B cell (primary cell): ENCODE measurements at regions of chr17 and their contacts with region 1.

Region 1: DNA sequence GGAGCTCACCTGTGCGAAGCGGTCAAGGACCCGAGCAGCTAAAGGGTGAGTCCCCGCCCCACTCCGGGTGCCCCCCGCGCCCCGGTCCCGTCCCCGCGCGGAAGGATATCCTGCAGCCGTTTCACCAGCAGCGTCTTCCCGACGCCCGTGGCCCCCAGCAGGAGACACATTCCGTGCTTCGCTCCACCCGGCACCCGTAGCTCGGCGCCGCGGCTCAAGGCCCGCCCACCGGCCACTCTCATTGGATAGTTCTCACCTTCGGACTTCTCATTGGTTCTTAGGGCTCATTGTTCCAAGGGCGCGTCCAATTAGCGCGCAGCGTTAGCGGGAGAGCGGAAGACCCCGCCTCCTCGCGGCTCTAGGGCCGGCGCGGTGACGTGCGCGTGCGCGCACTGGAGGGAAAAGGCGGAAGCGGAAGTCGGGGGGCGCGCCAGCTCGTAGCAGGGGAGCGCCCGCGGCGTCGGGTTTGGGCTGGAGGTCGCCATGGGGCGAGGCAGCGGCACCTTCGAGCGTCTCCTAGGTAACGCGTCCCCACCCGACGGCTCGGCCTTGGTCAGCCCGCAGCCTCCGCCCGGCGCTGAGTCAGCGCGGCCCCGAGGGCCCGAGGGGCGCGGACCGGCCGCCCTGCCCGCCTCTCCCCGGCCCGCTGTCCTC is at the starts of genes ARL16 and HGS:
- DNase-seq: peak; percentile 100
- ATAC-seq: peak; percentile 98
- H3K4me3 ChIP-seq: peak within 1 kb of the TSS; percentile 58 to 94 (median 93)
- H3K4me3 Mint-ChIP-seq: peak within 1 kb of the TSS; percentile 91
- H3K27ac ChIP-seq: peak within 1 kb of the TSS; percentile 53 to 83
- H3K27ac Mint-ChIP-seq: peak within 1 kb of the TSS; percentile 95
- H3K4me1 ChIP-seq: peaks cover 22 to 25% of the 10 kb centered on the region in 2 donors
- H3K4me1 Mint-ChIP-seq: peaks cover 33% of the 10 kb centered on the region
- H3K27me3 ChIP-seq: no peaks in the 10 kb centered on the region
- H3K27me3 Mint-ChIP-seq: no peaks in the 10 kb centered on the region
- CTCF ChIP-seq: no peak
- total RNA-seq, gene ARL16: 32.5 and 35.3 TPM in 2 replicates
- total RNA-seq, gene HGS: 184 and 190 TPM in 2 replicates

Region 2: GRCh38 chr17:80279895-80280294 is 1403.8 kb before region 1 on chr17:
- CTCF ChIA-PET with region 1: no interaction called
- POLR2A ChIA-PET with region 1: no interaction called
- intact Hi-C with region 1: no loop called
- DNase-seq: no peak
- ATAC-seq: no peak
- H3K4me3 ChIP-seq: no peak overlapping the region
- H3K4me3 Mint-ChIP-seq: no peak overlapping the region
- H3K27ac ChIP-seq: no peak overlapping the region
- H3K27ac Mint-ChIP-seq: no peak overlapping the region
- H3K4me1 ChIP-seq: no peaks in the 10 kb centered on the region
- H3K4me1 Mint-ChIP-seq: peaks cover 10% of the 10 kb centered on the region
- H3K27me3 ChIP-seq: no peaks in the 10 kb centered on the region
- H3K27me3 Mint-ChIP-seq: no peaks in the 10 kb centered on the region
- CTCF ChIP-seq: no peak

Region 3: DNA sequence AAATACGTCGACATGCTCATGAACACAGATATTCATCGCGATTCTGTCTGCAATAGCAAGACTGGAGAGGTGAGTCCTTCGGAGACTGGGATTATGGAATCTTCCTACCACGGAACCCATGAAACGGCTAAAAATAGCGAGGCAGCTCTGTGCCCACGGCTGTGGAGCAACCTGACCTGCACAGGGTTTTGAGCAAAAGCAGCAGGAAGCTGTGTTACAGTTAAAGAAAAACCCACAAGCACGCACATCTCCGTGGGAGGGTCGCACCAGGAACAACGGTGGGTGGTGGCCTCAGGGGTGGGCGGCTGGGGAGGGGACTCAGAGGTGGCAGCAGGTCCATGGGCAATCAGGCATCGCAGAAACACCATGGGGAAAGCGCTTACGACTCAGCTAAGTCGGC is 413.4 kb before region 1 on chr17:
- CTCF ChIA-PET with region 1: no interaction called
- POLR2A ChIA-PET with region 1: no interaction called
- intact Hi-C with region 1: no loop called
- DNase-seq: no peak
- ATAC-seq: no peak
- H3K4me3 ChIP-seq: no peak overlapping the region
- H3K4me3 Mint-ChIP-seq: no peak overlapping the region
- H3K27ac ChIP-seq: no peak overlapping the region
- H3K27ac Mint-ChIP-seq: no peak overlapping the region
- H3K4me1 ChIP-seq: no peaks in the 10 kb centered on the region
- H3K4me1 Mint-ChIP-seq: no peaks in the 10 kb centered on the region
- H3K27me3 ChIP-seq: no peaks in the 10 kb centered on the region
- H3K27me3 Mint-ChIP-seq: no peaks in the 10 kb centered on the region
- CTCF ChIP-seq: no peak

Region 4: DNA sequence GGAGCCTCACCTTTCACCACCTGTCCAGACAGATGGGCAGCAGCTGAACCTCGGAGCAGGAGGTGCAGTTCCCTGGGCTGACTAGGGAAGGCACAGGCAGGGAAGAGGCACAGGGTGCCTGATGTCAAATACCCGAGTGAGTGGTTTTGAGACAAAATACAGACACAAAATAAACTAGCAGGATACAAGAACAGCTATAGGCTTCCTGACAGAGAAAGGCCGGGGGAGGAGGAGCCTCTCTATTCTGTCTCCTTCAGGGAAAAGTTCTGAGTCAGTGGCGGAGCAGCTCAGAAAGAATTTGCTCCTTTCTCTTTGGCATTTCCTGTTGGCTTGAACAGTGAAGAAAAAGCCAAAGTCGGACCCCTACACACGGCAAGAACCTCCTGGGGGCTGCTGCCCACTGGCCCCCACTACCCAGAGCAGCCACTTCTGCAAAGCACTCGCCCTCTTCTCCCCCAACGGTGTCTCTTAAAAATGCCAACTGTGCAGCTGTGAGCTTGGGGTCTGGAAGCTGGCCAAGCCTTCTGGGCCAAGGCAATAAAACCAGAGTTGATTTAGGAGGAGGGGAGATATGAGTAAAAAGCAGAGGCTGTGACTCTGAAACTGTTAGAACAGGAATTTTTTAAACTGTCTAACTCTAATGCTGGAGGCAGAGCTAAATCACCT is 117.1 kb before region 1 on chr17:
- CTCF ChIA-PET with region 1: no interaction called
- POLR2A ChIA-PET with region 1: no interaction called
- intact Hi-C with region 1: no loop called
- DNase-seq: no peak
- ATAC-seq: no peak
- H3K4me3 ChIP-seq: no peak overlapping the region
- H3K4me3 Mint-ChIP-seq: no peak overlapping the region
- H3K27ac ChIP-seq: no peak overlapping the region
- H3K27ac Mint-ChIP-seq: no peak overlapping the region
- H3K4me1 ChIP-seq: peaks cover 13 to 21% of the 10 kb centered on the region in 2 donors
- H3K4me1 Mint-ChIP-seq: peaks cover 15% of the 10 kb centered on the region
- H3K27me3 ChIP-seq: no peaks in the 10 kb centered on the region
- H3K27me3 Mint-ChIP-seq: no peaks in the 10 kb centered on the region
- CTCF ChIP-seq: no peak

Region 5: DNA sequence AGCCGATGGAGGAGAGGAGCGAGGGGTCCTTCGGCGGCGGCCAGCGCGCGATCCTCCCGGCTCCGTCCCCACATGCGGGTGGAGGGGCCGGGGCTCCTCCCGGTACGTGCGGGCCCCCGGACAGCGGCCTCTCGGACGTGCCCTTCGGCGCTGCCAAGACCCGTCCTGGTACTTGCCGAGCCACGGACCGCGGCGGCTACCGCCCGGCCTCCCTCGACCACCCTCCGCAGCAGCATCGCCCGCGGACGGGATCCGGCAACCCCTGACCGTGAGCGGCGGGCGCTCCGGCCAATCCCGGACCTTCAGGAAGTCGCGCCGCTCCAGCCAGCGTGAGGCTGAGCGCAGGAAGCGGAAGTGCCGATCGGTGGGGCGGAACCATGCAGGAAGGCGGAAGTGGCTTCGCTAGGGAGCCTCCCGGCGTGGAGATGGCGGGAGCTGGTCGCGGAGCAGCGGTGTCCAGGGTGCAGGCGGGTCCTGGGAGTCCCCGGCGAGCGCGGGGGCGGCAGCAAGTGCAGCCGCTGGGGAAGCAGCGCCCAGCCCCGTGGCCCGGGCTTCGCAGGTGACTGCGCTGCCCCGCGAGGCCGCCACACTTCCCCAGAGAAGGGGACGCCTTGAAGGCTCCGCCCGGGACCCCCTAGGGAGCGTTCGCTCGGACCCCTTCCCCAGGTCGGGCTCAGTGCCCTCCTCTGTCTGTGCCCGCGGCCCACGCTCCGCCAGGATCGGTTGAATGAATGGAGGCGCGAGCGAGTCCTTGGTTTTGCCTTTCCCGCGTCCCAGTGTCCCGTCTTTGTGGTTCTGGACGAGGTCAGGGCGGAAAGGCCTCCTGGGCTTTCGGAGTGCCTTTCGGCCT is 17.1 kb before region 1 on chr17 and contains the starts of genes CCDC137 and OXLD1:
- CTCF ChIA-PET with region 1: interaction called, 5 read pairs
- POLR2A ChIA-PET with region 1: interaction called, 5 read pairs
- intact Hi-C with region 1: loop called (anchors 1 kb)
- DNase-seq: peak; percentile 94
- ATAC-seq: peak; percentile 97
- H3K4me3 ChIP-seq: peak within 1 kb of the TSS; percentile 77 to 98 (median 93)
- H3K4me3 Mint-ChIP-seq: peak within 1 kb of the TSS; percentile 91
- H3K27ac ChIP-seq: peak within 1 kb of the TSS; percentile 69 to 80
- H3K27ac Mint-ChIP-seq: peak within 1 kb of the TSS; percentile 96
- H3K4me1 ChIP-seq: peaks cover 19 to 25% of the 10 kb centered on the region in 2 donors
- H3K4me1 Mint-ChIP-seq: peaks cover 23% of the 10 kb centered on the region
- H3K27me3 ChIP-seq: no peaks in the 10 kb centered on the region
- H3K27me3 Mint-ChIP-seq: no peaks in the 10 kb centered on the region
- CTCF ChIP-seq: no peak
- total RNA-seq, gene CCDC137: 36.0 and 41.7 TPM in 2 replicates
- total RNA-seq, gene OXLD1: 38.6 and 39.5 TPM in 2 replicates

Region 6: GRCh38 chr17:81702971-81703746 is 19.4 kb after region 1 on chr17 and contains the start of gene MRPL12:
- CTCF ChIA-PET with region 1: interaction called, 4 read pairs
- POLR2A ChIA-PET with region 1: interaction called, 10 read pairs
- intact Hi-C with region 1: loop called (anchors 1 kb)
- DNase-seq: peak; percentile 94
- ATAC-seq: peak; percentile 95
- H3K4me3 ChIP-seq: peak within 1 kb of the TSS; percentile 45 to 98 (median 68)
- H3K4me3 Mint-ChIP-seq: peak within 1 kb of the TSS; percentile 90
- H3K27ac ChIP-seq: peak within 1 kb of the TSS; percentile 57 to 97
- H3K27ac Mint-ChIP-seq: peak within 1 kb of the TSS; percentile 91
- H3K4me1 ChIP-seq: peaks cover 24 to 32% of the 10 kb centered on the region in 2 donors
- H3K4me1 Mint-ChIP-seq: peaks cover 33% of the 10 kb centered on the region
- H3K27me3 ChIP-seq: no peaks in the 10 kb centered on the region
- H3K27me3 Mint-ChIP-seq: no peaks in the 10 kb centered on the region
- CTCF ChIP-seq: peak; percentile 36
- total RNA-seq, gene MRPL12: 23.8 and 24.1 TPM in 2 replicates

Region 7: GRCh38 chr17:81711814-81712467 is 28.2 kb after region 1 on chr17 and contains the start of gene SLC25A10:
- CTCF ChIA-PET with region 1: no interaction called
- POLR2A ChIA-PET with region 1: interaction called, 8 read pairs
- intact Hi-C with region 1: loop called (anchors 2 kb)
- DNase-seq: peak; percentile 87
- ATAC-seq: peak; percentile 89
- H3K4me3 ChIP-seq: peak within 1 kb of the TSS in 4 of 5 experiments; percentile 35 to 80 (median 62)
- H3K4me3 Mint-ChIP-seq: peak within 1 kb of the TSS; percentile 89
- H3K27ac ChIP-seq: no peak within 1 kb of the TSS
- H3K27ac Mint-ChIP-seq: peak within 1 kb of the TSS; percentile 78
- H3K4me1 ChIP-seq: peaks cover 15 to 25% of the 10 kb centered on the region in 2 donors
- H3K4me1 Mint-ChIP-seq: peaks cover 12% of the 10 kb centered on the region
- H3K27me3 ChIP-seq: peaks cover 0 to 3% (median 0%) of the 10 kb centered on the region in 4 experiments
- H3K27me3 Mint-ChIP-seq: no peaks in the 10 kb centered on the region
- CTCF ChIP-seq: peak; percentile 15
- total RNA-seq, gene SLC25A10: 5.0 and 6.5 TPM in 2 replicates

Region 8: GRCh38 chr17:81854974-81855774 is 171.5 kb after region 1 on chr17:
- CTCF ChIA-PET with region 1: no interaction called
- POLR2A ChIA-PET with region 1: interaction called, 13 read pairs
- intact Hi-C with region 1: loop called (anchors 1 kb)
- DNase-seq: no peak
- ATAC-seq: no peak
- H3K4me3 ChIP-seq: no peak overlapping the region
- H3K4me3 Mint-ChIP-seq: no peak overlapping the region
- H3K27ac ChIP-seq: no peak overlapping the region
- H3K27ac Mint-ChIP-seq: peak overlapping the region; percentile 20
- H3K4me1 ChIP-seq: peaks cover 10 to 14% of the 10 kb centered on the region in 2 donors
- H3K4me1 Mint-ChIP-seq: peaks cover 9% of the 10 kb centered on the region
- H3K27me3 ChIP-seq: no peaks in the 10 kb centered on the region
- H3K27me3 Mint-ChIP-seq: no peaks in the 10 kb centered on the region
- CTCF ChIP-seq: no peak